Stomach (tissue), 19 donors: ENCODE measurements at regions of chr15 and their contacts with region 1.

Region 1: DNA sequence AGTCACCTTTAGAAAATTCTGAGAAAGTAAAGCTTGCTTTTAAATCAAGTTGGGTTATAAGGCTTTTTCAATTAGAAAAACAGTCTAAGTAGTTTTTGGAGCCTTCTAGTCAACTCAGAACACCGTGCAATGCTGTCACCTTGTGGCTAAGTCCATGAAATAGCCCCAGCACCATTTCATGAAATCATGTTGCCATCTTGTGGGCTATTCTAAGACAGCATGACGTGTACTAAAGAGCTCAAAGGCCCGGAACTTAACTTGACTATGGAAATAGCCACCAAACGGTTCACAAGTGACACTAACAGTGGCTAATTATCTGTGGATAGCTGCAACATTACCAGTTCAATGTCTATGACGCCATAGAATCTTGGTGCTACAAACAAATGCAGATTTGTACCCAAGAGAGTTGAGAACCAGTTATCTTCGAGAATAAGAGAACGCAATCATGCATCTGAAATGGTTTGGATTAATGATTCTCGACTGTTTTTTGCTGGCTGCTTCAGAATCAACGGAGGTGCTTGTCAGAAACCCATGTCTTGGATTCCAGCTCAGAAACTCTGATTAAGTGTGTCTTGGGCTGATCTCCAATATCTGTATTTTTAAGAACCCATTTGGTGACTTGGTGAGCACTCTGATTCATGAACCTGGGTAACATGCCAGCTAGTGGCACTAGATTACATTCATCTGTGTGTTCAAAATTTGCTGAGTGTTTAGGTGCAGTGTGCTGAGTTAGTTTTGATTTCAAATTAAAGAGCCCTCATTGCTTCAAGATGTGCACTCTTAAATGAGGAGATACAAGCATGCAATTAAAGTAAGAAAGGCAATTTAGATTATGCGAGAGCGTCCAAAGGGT is 111.2 kb upstream of the MCTP2 start:
- DNase-seq: peak; percentile 60 to 94
- H3K4me3 ChIP-seq: no peak overlapping the region
- H3K27ac ChIP-seq: peak overlapping the region in 4 of 5 donors; percentile 24 to 64 (median 31)
- H3K4me1 ChIP-seq: peaks cover 0 to 11% (median 10%) of the 10 kb centered on the region in 4 donors
- H3K27me3 ChIP-seq: peaks cover 0 to 5% (median 0%) of the 10 kb centered on the region in 3 donors
- CTCF ChIP-seq: peak in 5 of 7 experiments; percentile 70 to 95 (median 83)
- EP300 ChIP-seq: no peak
- POLR2A ChIP-seq: no peak

Region 2: GRCh38 chr15:93030430-93031105 is 1089.6 kb before region 1 on chr15:
- intact Hi-C with region 1: loop called (anchors 5 kb)
- DNase-seq: peak; percentile 77 to 90
- H3K4me3 ChIP-seq: peak overlapping the region in 1 of 4 donors; percentile 0
- H3K27ac ChIP-seq: peak overlapping the region in 4 of 5 donors; percentile 75 to 87 (median 84)
- H3K4me1 ChIP-seq: peaks cover 36 to 58% (median 49%) of the 10 kb centered on the region in 4 donors
- H3K27me3 ChIP-seq: no peaks in the 10 kb centered on the region
- CTCF ChIP-seq: peak in 5 of 7 experiments; percentile 79 to 89 (median 83)
- EP300 ChIP-seq: no peak
- POLR2A ChIP-seq: no peak

Region 3: GRCh38 chr15:93942269-93942694 is 177.9 kb before region 1 on chr15:
- intact Hi-C with region 1: no loop called
- DNase-seq: peak in 1 of 2 donors; percentile 10
- H3K4me3 ChIP-seq: no peak overlapping the region
- H3K27ac ChIP-seq: no peak overlapping the region
- H3K4me1 ChIP-seq: peaks cover 0 to 11% (median 3%) of the 10 kb centered on the region in 4 donors
- H3K27me3 ChIP-seq: no peaks in the 10 kb centered on the region
- CTCF ChIP-seq: no peak
- EP300 ChIP-seq: no peak
- POLR2A ChIP-seq: no peak

Region 4: GRCh38 chr15:93997084-93997918 is 122.8 kb before region 1 on chr15:
- intact Hi-C with region 1: loop called (anchors 10 kb)
- DNase-seq: peak in 1 of 2 donors; percentile 67
- H3K4me3 ChIP-seq: no peak overlapping the region
- H3K27ac ChIP-seq: no peak overlapping the region
- H3K4me1 ChIP-seq: peaks cover 0 to 17% (median 4%) of the 10 kb centered on the region in 4 donors
- H3K27me3 ChIP-seq: peaks cover 0 to 80% (median 6%) of the 10 kb centered on the region in 3 donors
- CTCF ChIP-seq: peak in 4 of 7 experiments; percentile 47 to 66 (median 54)
- EP300 ChIP-seq: no peak
- POLR2A ChIP-seq: no peak